ENCODE measurements at regions of chr12 and their contacts with region 1.

Region 1: DNA sequence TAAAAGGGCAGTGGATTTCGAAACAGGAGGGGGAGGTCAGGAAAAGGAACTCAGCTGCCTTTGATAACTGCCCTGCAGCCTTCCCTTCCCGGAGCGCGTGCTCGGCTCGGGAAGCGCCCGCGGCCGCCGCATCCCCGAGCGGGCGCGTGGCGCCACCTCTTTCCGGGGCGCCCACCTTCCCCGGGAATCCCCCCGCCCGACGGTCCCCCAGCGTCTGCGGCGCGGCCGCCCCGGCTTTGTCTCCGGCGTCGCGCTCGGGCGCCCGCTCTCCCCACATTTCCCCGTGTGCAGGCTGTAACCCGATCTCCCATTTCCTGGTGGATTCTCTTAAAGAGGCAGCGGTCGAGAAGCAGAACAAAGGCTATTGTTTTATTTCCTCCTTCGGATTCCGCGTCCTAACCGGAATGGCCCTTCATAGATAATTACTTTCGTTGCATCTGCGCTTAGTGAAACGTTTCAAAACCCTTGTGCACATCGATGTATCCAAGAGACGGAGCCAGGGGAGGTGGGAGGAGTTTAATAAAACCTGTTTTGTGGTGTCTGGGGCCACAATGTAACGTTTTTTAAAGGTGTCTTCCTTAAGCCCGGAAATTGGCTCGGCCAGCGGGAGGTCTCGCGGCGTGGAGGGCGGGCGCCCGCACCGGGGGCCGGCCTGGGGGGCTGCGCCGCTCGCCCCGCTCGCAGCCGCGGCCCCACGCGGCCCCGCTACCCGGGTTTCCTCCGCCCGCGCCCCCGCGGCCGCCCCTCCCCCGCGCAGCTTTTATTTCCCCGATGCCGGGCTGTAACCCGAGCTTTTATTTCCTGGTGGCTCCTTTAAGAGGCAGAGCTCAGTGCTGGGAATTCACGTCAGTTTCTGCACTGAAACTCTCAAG is at the start of gene ETV6:
- DNase-seq: peak; percentile 89
- H3K4me3 ChIP-seq: peak within 1 kb of the TSS; percentile 92
- H3K27ac ChIP-seq: peak within 1 kb of the TSS; percentile 79
- H3K4me1 ChIP-seq: peaks cover 26% of the 10 kb centered on the region
- CTCF ChIP-seq: no peak
- total RNA-seq, gene ETV6: 17.2 and 19.3 TPM in 2 replicates

Region 2: GRCh38 chr12:11753150-11753499 is 104.1 kb after region 1 on chr12:
- CTCF ChIA-PET with region 1: no interaction called
- POLR2A ChIA-PET with region 1: interaction called, 3 read pairs
- intact Hi-C with region 1: loop called (anchors 2 kb)
- DNase-seq: peak; percentile 93
- H3K4me3 ChIP-seq: peak overlapping the region; percentile 40
- H3K27ac ChIP-seq: peak overlapping the region; percentile 100
- H3K4me1 ChIP-seq: peaks cover 100% of the 10 kb centered on the region
- CTCF ChIP-seq: no peak

Region 3: DNA sequence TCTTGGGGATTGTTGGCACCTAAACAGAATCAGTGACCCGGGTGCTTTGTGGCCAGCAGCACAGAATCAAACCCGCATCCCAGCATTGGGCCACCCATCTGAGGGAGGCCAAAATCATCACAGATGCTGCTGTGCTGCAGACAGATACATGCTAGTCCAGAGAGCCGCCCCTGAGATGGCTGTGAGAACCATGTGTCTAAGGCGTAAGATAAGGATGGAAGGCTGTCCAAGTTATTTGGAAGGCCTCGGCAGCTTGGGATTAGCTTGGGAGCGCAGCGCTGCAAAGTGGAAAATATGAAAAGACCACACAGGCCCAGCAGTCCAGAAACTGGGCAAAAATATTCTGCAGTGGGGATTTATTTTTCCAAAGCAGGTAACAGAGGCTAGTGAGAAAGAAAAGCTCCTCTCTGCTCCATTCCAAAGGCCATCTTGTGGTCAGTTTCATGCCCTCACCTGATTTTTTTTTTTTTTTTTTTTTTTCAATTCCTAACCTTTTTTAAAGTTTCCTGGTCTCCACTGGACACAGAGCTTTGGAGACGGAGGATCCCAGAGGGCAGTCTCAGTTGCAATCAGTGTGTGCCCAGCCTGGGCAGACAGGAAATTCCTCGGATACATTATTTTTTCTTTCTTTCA is 242.8 kb after region 1 on chr12:
- CTCF ChIA-PET with region 1: no interaction called
- POLR2A ChIA-PET with region 1: interaction called, 3 read pairs
- intact Hi-C with region 1: loop called (anchors 5 kb)
- DNase-seq: no peak
- H3K4me3 ChIP-seq: no peak overlapping the region
- H3K27ac ChIP-seq: peak overlapping the region; percentile 98
- H3K4me1 ChIP-seq: peaks cover 81% of the 10 kb centered on the region
- CTCF ChIP-seq: peak; percentile 53

Region 4: GRCh38 chr12:12032851-12033588 is 384.0 kb after region 1 on chr12:
- CTCF ChIA-PET with region 1: no interaction called
- POLR2A ChIA-PET with region 1: no interaction called
- intact Hi-C with region 1: loop called (anchors 2 kb)
- DNase-seq: peak; percentile 80
- H3K4me3 ChIP-seq: peak overlapping the region; percentile 52
- H3K27ac ChIP-seq: peak overlapping the region; percentile 51
- H3K4me1 ChIP-seq: peaks cover 39% of the 10 kb centered on the region
- CTCF ChIP-seq: peak; percentile 100